ENCODE measurements at regions of chr16 and their contacts with region 1.

Region 1: DNA sequence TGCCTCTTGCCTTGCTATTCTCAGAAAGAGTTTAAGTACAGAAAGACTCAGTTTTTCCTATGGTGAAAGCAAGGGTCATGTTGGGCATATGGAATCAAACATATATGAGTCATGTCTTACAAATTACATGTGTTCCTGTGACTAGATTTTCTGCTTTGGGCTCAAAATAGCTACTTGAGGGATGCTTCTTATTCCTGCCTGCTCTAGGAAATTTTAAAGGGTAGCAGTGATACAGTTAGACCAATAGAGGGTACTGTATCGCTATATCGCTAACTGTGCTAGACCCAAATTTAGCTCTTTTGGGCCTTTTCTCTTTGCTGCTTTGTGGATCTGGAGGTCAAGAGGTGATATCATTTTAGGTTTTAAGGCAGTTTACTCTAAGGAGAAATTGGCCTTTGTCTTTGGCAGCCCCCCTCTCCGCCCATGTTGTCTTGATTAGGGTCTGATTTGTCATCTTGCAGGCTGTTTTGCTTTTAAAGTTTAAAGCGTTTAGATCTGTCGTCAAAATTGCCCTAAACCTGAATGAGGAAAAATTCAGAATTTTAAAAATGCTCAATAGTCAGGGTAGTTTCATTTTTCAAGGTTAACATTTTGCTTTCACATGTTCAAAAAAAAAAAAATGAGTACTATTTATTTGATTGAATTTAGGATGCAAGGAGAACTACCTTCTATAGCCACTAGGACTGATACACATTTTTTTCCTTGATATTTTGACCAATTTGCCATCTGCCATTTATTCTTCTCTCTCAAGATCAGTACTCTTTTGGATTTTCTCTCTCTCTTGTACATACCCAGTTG is 8.8 kb downstream of the NFATC3 start:
- DNase-seq: no peak
- H3K4me3 ChIP-seq: no peak overlapping the region
- H3K27ac ChIP-seq: peak overlapping the region in 3 of 8 donors; percentile 3 to 9 (median 5)
- H3K4me1 ChIP-seq: peaks cover 36 to 100% (median 83%) of the 10 kb centered on the region in 6 donors
- H3K27me3 ChIP-seq: no peaks in the 10 kb centered on the region
- CTCF ChIP-seq: peak in 8 of 11 experiments; percentile 17 to 48 (median 30)
- POLR2A ChIP-seq: no peak

Region 2: GRCh38 chr16:68183046-68183445 is 89.0 kb after region 1 on chr16:
- intact Hi-C with region 1: no loop called
- DNase-seq: no peak
- H3K4me3 ChIP-seq: no peak overlapping the region
- H3K27ac ChIP-seq: no peak overlapping the region
- H3K4me1 ChIP-seq: no peaks in the 10 kb centered on the region
- H3K27me3 ChIP-seq: no peaks in the 10 kb centered on the region
- CTCF ChIP-seq: no peak
- POLR2A ChIP-seq: no peak

Region 3: GRCh38 chr16:68229431-68230198 is 135.6 kb after region 1 on chr16:
- intact Hi-C with region 1: loop called (anchors 10 kb)
- DNase-seq: no peak
- H3K4me3 ChIP-seq: no peak overlapping the region
- H3K27ac ChIP-seq: peak overlapping the region in 2 of 8 donors; percentile 14 to 23
- H3K4me1 ChIP-seq: peaks cover 9 to 47% (median 13%) of the 10 kb centered on the region in 6 donors
- H3K27me3 ChIP-seq: no peaks in the 10 kb centered on the region
- CTCF ChIP-seq: peak; percentile 72 to 87 (median 84)
- POLR2A ChIP-seq: no peak

Region 4: DNA sequence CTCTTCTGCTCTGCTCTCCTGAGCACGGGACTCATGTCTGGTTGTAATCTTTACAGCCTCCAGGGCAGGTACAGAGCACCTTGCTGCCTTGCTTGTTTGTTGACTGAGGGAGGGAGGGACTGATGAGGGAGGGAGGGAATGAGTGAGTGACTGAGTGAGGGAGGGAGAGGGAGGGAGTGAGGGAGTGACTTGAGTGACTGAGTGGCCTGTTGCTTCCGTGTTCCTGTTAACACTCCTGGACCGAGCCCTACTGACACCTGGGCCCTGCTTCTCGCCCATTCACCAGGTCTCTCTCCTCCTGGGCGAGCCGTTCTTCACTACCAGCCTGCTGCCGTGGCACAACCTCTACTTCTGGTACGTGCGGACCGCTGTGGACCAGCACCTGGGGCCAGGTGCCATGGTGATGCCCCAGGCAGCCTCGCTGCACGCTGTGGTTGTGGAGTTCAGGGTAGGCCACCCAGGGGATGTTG is 258.0 kb after region 1 on chr16:
- intact Hi-C with region 1: no loop called
- DNase-seq: no peak
- H3K4me3 ChIP-seq: no peak overlapping the region
- H3K27ac ChIP-seq: no peak overlapping the region
- H3K4me1 ChIP-seq: peaks cover 16 to 21% (median 19%) of the 10 kb centered on the region in 6 donors
- H3K27me3 ChIP-seq: no peaks in the 10 kb centered on the region
- CTCF ChIP-seq: no peak
- POLR2A ChIP-seq: no peak